ENCODE measurements at regions of chr5 and their contacts with region 1.

Region 1: GRCh38 chr5:138035605-138036537 is 3.0 kb upstream of the FAM13B start:
- DNase-seq: peak; percentile 78
- H3K4me3 Mint-ChIP-seq: no peak overlapping the region
- H3K27ac Mint-ChIP-seq: no peak overlapping the region
- H3K4me1 Mint-ChIP-seq: peaks cover 25% of the 10 kb centered on the region
- H3K27me3 Mint-ChIP-seq: no peaks in the 10 kb centered on the region

Region 2: GRCh38 chr5:137923856-137924255 is 112.0 kb before region 1 on chr5:
- CTCF ChIA-PET with region 1: no interaction called
- POLR2A ChIA-PET with region 1: no interaction called
- DNase-seq: no peak
- H3K4me3 Mint-ChIP-seq: no peak overlapping the region
- H3K27ac Mint-ChIP-seq: no peak overlapping the region
- H3K4me1 Mint-ChIP-seq: no peaks in the 10 kb centered on the region
- H3K27me3 Mint-ChIP-seq: no peaks in the 10 kb centered on the region

Region 3: GRCh38 chr5:138025285-138025684 is 10.6 kb before region 1 on chr5:
- CTCF ChIA-PET with region 1: interaction called, 13 read pairs
- POLR2A ChIA-PET with region 1: no interaction called
- DNase-seq: no peak
- H3K4me3 Mint-ChIP-seq: no peak overlapping the region
- H3K27ac Mint-ChIP-seq: no peak overlapping the region
- H3K4me1 Mint-ChIP-seq: peaks cover 55% of the 10 kb centered on the region
- H3K27me3 Mint-ChIP-seq: no peaks in the 10 kb centered on the region

Region 4: GRCh38 chr5:138065102-138065501 is 29.2 kb after region 1 on chr5:
- CTCF ChIA-PET with region 1: interaction called, 28 read pairs
- POLR2A ChIA-PET with region 1: interaction called, 3 read pairs
- DNase-seq: no peak
- H3K4me3 Mint-ChIP-seq: no peak overlapping the region
- H3K27ac Mint-ChIP-seq: no peak overlapping the region
- H3K4me1 Mint-ChIP-seq: peaks cover 6% of the 10 kb centered on the region
- H3K27me3 Mint-ChIP-seq: no peaks in the 10 kb centered on the region

Measured in activated CD4-positive, alpha-beta T cell treated with anti-CD3 and anti-CD28 coated beads, Interleukin-2, amount 10 ng/mL, durations not matched to agents 7 days and 5 days (primary cell).